ENCODE measurements at regions of chr1 and their contacts with region 1.

Region 1: DNA sequence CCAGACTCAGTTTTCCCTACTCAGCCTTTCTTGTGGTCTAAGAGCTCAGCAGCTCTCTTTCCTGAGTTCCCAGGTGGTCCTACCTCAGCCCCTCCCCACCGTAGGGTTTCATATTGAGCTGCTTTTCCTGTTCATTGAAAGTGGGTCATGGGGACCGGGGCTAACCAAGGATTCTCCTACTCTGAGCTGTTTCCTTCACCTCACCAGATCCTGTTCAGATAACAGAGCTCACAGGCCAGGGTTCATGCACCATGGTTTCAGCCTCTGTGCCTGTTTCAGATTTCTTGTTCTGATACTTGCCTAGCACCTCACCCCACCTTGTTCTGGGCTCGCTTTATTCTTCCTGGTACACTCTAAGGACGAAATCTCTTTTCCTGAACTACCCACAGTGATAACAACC is 8.5 kb downstream of the UBQLN4 start:
- DNase-seq: no peak
- H3K4me3 Mint-ChIP-seq: no peak overlapping the region
- H3K27ac Mint-ChIP-seq: no peak overlapping the region
- H3K4me1 Mint-ChIP-seq: peaks cover 8% of the 10 kb centered on the region
- H3K27me3 Mint-ChIP-seq: no peaks in the 10 kb centered on the region

Region 2: DNA sequence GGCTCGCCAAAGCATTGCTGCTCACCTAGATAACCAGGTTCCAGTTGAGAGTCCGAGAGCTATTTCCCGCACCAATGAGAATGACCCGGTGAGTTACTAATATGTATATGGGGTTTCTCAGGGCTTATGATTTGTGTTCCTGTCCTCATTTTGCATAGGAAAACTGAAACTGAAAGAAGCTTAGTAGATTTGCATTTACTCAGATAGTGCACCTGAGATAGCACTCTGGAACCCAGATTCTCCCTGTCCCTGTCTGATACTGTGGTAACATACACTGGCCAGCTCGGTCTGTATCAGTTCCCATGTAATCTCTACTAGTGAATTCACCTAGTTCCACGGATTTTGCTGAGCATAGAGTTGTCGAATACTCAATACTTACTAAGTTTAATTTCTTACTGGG is 328.0 kb before region 1 on chr1:
- CTCF ChIA-PET with region 1: no interaction called
- POLR2A ChIA-PET with region 1: no interaction called
- DNase-seq: no peak
- H3K4me3 Mint-ChIP-seq: no peak overlapping the region
- H3K27ac Mint-ChIP-seq: peak overlapping the region; percentile 73
- H3K4me1 Mint-ChIP-seq: peaks cover 25% of the 10 kb centered on the region
- H3K27me3 Mint-ChIP-seq: no peaks in the 10 kb centered on the region

Region 3: DNA sequence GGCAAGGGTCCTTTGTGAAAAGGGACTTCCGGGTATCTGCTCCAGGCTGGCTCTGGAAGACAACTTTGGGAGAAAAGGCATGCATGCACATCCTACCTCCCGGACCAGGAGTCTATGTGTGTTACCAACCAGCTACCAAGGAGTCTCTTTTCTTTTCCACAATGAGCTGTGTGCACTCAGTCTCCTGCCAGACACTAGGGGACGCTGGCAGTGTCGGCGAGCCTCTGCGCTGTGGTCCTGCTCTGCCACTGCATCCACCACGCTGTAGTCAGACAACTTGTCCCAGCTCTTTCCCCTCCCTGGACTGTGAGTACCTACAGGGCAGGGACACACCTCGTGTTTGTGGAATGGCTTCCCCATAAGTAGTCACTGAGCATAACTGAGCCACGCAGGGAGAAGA is 19.2 kb before region 1 on chr1:
- CTCF ChIA-PET with region 1: interaction called, 11 read pairs
- POLR2A ChIA-PET with region 1: no interaction called
- DNase-seq: peak; percentile 33
- H3K4me3 Mint-ChIP-seq: no peak overlapping the region
- H3K27ac Mint-ChIP-seq: no peak overlapping the region
- H3K4me1 Mint-ChIP-seq: peaks cover 14% of the 10 kb centered on the region
- H3K27me3 Mint-ChIP-seq: no peaks in the 10 kb centered on the region

Measured in activated CD4-positive, alpha-beta T cell treated with anti-CD3 and anti-CD28 coated beads, Interleukin-2, amount 10 ng/mL, durations not matched to agents 7 days and 5 days (primary cell).